ENCODE measurements at regions of chr7 and their contacts with region 1.

Region 1: GRCh38 chr7:152136686-152137085 is 111.2 kb downstream of the GALNT11 start:
- DNase-seq: no peak
- ATAC-seq: peak; percentile 46 to 81 (median 70)
- H3K4me3 ChIP-seq: no peak overlapping the region
- H3K27ac ChIP-seq: peak overlapping the region in 8 of 10 donors; percentile 11 to 64 (median 49)
- H3K4me1 ChIP-seq: peaks cover 3 to 32% (median 17%) of the 10 kb centered on the region in 9 donors
- H3K27me3 ChIP-seq: no peaks in the 10 kb centered on the region
- CTCF ChIP-seq: no peak

Region 2: DNA sequence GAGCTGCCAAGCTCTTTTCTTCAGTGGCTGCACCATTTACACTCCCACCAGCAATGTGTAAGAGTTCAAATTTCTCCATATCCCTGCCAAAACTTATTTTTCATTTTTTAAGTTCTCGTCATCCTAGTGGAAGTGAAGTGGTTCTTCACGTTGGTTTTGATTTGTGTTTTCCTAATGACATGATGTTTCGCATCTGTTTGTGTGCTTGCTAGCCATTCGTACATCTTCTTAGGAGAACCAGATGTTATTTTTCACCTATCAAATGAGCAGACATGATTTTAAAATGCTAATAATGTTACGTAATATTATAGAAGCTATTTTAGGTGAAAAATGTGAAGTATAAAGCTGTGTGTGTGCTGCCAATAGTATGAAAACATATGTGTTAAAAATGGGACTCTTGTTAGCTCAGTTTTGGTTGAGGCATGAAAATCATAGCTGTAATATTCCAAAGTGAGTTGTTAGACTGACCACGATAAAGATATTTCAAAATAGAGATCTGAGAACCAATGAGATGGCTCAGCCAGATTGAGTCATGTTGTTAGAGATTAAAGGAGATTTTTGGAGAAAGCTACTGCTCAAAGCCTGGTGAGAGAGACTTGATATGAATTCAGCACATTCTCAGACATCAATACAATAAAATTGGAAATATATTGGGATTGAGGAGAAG is 137.1 kb before region 1 on chr7:
- intact Hi-C with region 1: no loop called
- DNase-seq: no peak
- ATAC-seq: peak in 2 of 8 donors; percentile 41 to 56
- H3K4me3 ChIP-seq: no peak overlapping the region
- H3K27ac ChIP-seq: peak overlapping the region in 1 of 10 donors; percentile 11
- H3K4me1 ChIP-seq: no peaks in the 10 kb centered on the region
- H3K27me3 ChIP-seq: peaks cover 0 to 12% (median 0%) of the 10 kb centered on the region in 7 donors
- CTCF ChIP-seq: no peak

Region 3: GRCh38 chr7:152035817-152036216 is 100.9 kb before region 1 on chr7:
- intact Hi-C with region 1: loop called in 1 of 10 experiments (anchors 10 kb)
- DNase-seq: no peak
- ATAC-seq: no peak
- H3K4me3 ChIP-seq: no peak overlapping the region
- H3K27ac ChIP-seq: no peak overlapping the region
- H3K4me1 ChIP-seq: peaks cover 0 to 5% (median 0%) of the 10 kb centered on the region in 9 donors
- H3K27me3 ChIP-seq: no peaks in the 10 kb centered on the region
- CTCF ChIP-seq: no peak

Region 4: DNA sequence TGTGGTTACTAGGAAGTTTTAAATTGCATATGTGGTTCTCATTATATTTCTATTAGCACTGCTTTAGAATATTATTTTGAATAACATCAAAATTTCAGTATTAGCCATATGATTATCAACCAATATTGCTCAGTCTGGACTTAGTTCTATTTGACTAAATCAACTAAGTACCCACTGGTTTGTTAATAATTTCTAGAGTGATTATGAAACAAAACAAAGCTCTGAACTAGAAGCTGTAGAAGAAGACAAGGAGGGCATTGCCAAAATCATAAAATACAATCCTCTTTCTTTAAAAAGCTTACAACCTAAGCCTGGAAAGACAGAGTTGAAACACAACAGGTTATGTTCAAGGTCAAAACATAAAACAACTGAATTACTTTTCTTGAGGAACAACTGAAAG is 94.4 kb after region 1 on chr7:
- intact Hi-C with region 1: no loop called
- DNase-seq: no peak
- ATAC-seq: no peak
- H3K4me3 ChIP-seq: no peak overlapping the region
- H3K27ac ChIP-seq: no peak overlapping the region
- H3K4me1 ChIP-seq: no peaks in the 10 kb centered on the region
- H3K27me3 ChIP-seq: no peaks in the 10 kb centered on the region
- CTCF ChIP-seq: no peak